Activated CD4-positive, alpha-beta T cell treated with anti-CD3 and anti-CD28 coated beads for 36 hours (primary cell): ENCODE measurements at regions of chr22 and their contacts with region 1.

Region 1: GRCh38 chr22:20581503-20582170 is 74.2 kb downstream of the MED15 start:
- DNase-seq: no peak
- ATAC-seq: no peak
- H3K4me3 Mint-ChIP-seq: no peak overlapping the region
- H3K27ac Mint-ChIP-seq: no peak overlapping the region
- H3K4me1 Mint-ChIP-seq: peaks cover 21% of the 10 kb centered on the region
- H3K27me3 Mint-ChIP-seq: no peaks in the 10 kb centered on the region

Region 2: DNA sequence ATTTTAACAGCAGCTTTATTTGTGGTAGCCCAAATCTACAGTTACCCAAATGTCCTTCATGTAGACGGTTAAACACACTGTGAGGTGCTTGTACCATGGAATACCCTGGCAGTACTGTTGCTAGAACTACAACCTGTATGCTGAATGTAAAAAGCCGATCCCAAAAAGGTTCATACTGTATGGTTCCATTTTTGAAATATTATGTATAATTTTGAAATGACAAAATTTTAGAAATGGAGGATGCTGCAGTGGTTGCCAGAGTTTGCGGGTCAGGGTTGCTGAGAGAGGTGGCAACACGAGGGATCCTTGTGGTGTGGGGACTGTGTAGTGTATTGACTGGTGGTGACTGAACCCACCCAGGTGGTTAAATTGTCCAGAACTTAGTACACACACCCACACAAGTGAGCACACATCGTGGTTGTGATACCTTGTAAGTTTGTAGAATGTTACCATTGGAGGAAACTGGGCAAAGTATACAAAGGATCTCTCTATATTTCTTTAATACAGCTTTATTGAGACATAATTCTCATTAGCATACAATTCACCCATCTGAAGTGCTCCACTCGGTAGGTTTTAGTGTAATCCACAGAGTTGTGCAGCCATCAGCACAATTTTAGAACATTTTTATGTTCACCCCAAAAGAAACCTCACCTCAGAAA is 18.3 kb before region 1 on chr22:
- CTCF ChIA-PET with region 1: interaction called, 14 read pairs
- POLR2A ChIA-PET with region 1: interaction called, 3 read pairs
- intact Hi-C with region 1: no loop called
- DNase-seq: peak; percentile 49
- ATAC-seq: peak; percentile 43
- H3K4me3 Mint-ChIP-seq: no peak overlapping the region
- H3K27ac Mint-ChIP-seq: peak overlapping the region; percentile 61
- H3K4me1 Mint-ChIP-seq: peaks cover 62% of the 10 kb centered on the region
- H3K27me3 Mint-ChIP-seq: no peaks in the 10 kb centered on the region